Activated naive CD4-positive, alpha-beta T cell treated with anti-CD3 and anti-CD28 coated beads for 36 hours (primary cell): ENCODE measurements at regions of chr14 and their contacts with region 1.

Region 1: DNA sequence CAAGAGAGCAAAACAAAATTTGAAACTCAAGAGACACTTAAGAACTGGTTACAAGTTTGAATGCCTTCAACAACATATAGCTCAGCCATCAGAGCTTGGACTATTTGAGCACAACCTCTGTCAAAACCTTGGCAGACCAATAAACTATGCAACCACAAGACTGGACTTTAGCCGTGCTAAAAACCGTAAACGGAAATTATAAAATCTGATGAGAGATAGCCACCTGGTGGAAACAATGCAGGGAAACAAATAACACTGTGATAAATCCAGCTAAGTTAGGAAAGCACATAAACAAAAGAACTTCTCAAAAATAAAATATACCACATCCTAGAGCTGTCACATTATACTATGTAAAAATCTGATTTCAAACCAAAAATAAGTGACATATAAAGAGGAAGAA is 1074.2 kb upstream of the NOVA1 start:
- DNase-seq: no peak
- H3K4me3 Mint-ChIP-seq: no peak overlapping the region
- H3K27ac Mint-ChIP-seq: no peak overlapping the region
- H3K4me1 Mint-ChIP-seq: no peaks in the 10 kb centered on the region
- H3K27me3 Mint-ChIP-seq: no peaks in the 10 kb centered on the region

Region 2: DNA sequence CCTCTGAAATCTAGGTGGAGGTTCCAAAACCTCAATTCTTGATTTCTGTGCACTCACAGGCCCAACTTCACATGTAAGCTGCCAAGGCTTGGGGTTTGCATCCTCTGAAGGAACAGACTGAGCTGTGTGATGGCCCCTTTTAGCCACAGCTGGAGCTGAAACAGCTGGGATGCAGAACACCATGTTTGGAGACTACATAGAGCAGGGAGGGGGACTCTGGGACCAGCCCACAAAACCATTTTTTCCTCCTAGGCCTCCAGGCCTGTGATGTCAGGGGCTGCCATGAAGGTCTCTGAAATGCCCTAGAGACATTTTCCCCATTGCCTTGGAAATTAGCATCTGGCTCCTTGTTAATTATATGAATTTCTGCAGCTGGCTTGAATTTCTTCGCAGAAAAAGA is 48.3 kb before region 1 on chr14:
- CTCF ChIA-PET with region 1: no interaction called
- intact Hi-C with region 1: no loop called
- DNase-seq: no peak
- H3K4me3 Mint-ChIP-seq: no peak overlapping the region
- H3K27ac Mint-ChIP-seq: no peak overlapping the region
- H3K4me1 Mint-ChIP-seq: no peaks in the 10 kb centered on the region
- H3K27me3 Mint-ChIP-seq: no peaks in the 10 kb centered on the region

Region 3: GRCh38 chr14:27660683-27661082 is 11.4 kb before region 1 on chr14:
- CTCF ChIA-PET with region 1: interaction called, 12 read pairs
- intact Hi-C with region 1: no loop called
- DNase-seq: no peak
- H3K4me3 Mint-ChIP-seq: no peak overlapping the region
- H3K27ac Mint-ChIP-seq: no peak overlapping the region
- H3K4me1 Mint-ChIP-seq: no peaks in the 10 kb centered on the region
- H3K27me3 Mint-ChIP-seq: no peaks in the 10 kb centered on the region